ENCODE measurements at regions of chr5 and their contacts with region 1.

Region 1: GRCh38 chr5:36507332-36507952 is 99.0 kb upstream of the SLC1A3 start:
- DNase-seq: peak in 1 of 2 experiments; percentile 91
- H3K4me3 ChIP-seq: no peak overlapping the region
- H3K27ac ChIP-seq: no peak overlapping the region
- H3K4me1 ChIP-seq: no peaks in the 10 kb centered on the region
- H3K27me3 ChIP-seq: no peaks in the 10 kb centered on the region
- CTCF ChIP-seq: peak; percentile 68 to 81 (median 81)
- EP300 ChIP-seq: no peak
- POLR2A ChIP-seq: no peak
- RAD21 ChIP-seq: peak; percentile 75 to 82

Region 2: GRCh38 chr5:36363744-36364143 is 143.7 kb before region 1 on chr5:
- CTCF ChIA-PET with region 1: no interaction called
- POLR2A ChIA-PET with region 1: no interaction called
- DNase-seq: no peak
- H3K4me3 ChIP-seq: no peak overlapping the region
- H3K27ac ChIP-seq: no peak overlapping the region
- H3K4me1 ChIP-seq: no peaks in the 10 kb centered on the region
- H3K27me3 ChIP-seq: no peaks in the 10 kb centered on the region
- CTCF ChIP-seq: no peak
- EP300 ChIP-seq: no peak
- POLR2A ChIP-seq: no peak
- RAD21 ChIP-seq: no peak

Region 3: GRCh38 chr5:36414869-36415282 is 92.6 kb before region 1 on chr5:
- CTCF ChIA-PET with region 1: interaction called, 138 read pairs
- POLR2A ChIA-PET with region 1: no interaction called
- DNase-seq: no peak
- H3K4me3 ChIP-seq: no peak overlapping the region
- H3K27ac ChIP-seq: no peak overlapping the region
- H3K4me1 ChIP-seq: peaks cover 4 to 17% (median 8%) of the 10 kb centered on the region in 4 experiments; a peak in 5 of 7 replicates
- H3K27me3 ChIP-seq: peaks cover 6 to 36% (median 24%) of the 10 kb centered on the region in 4 experiments; a peak in 6 of 7 replicates
- CTCF ChIP-seq: peak in 1 of 3 experiments; percentile 48; a peak in 1 of 4 replicates
- EP300 ChIP-seq: no peak
- POLR2A ChIP-seq: no peak
- RAD21 ChIP-seq: peak; percentile 56 to 70

Region 4: GRCh38 chr5:36494756-36495601 is 12.5 kb before region 1 on chr5:
- CTCF ChIA-PET with region 1: interaction called, 72 read pairs
- POLR2A ChIA-PET with region 1: no interaction called
- DNase-seq: no peak
- H3K4me3 ChIP-seq: no peak overlapping the region
- H3K27ac ChIP-seq: no peak overlapping the region
- H3K4me1 ChIP-seq: peaks cover 0 to 2% (median 0%) of the 10 kb centered on the region in 4 experiments; a peak in 2 of 7 replicates
- H3K27me3 ChIP-seq: no peaks in the 10 kb centered on the region
- CTCF ChIP-seq: no peak
- EP300 ChIP-seq: no peak
- POLR2A ChIP-seq: no peak
- RAD21 ChIP-seq: no peak

Region 5: DNA sequence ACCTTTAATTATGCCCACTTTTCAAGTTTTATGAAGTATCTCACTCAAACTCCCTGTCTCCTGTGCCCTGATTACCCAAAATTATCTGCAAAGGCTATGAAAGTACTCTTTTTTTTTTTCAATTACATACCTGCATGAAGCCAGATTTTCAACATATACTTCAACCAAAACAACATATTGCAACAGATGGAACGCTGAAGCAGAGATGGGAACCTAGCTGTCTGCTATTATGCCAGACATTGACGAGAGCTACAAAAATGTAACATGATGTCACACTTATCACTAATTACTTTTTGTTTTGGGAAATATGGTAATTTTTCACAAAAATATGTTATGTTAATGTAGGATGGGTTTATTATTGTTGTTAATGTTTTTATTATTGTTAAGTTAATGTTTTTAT is 12.4 kb after region 1 on chr5:
- CTCF ChIA-PET with region 1: interaction called, 13 read pairs
- POLR2A ChIA-PET with region 1: no interaction called
- DNase-seq: no peak
- H3K4me3 ChIP-seq: no peak overlapping the region
- H3K27ac ChIP-seq: no peak overlapping the region
- H3K4me1 ChIP-seq: peaks cover 0 to 3% (median 2%) of the 10 kb centered on the region in 4 experiments; a peak in 2 of 7 replicates
- H3K27me3 ChIP-seq: no peaks in the 10 kb centered on the region
- CTCF ChIP-seq: no peak
- EP300 ChIP-seq: no peak
- POLR2A ChIP-seq: no peak
- RAD21 ChIP-seq: no peak

Measured in H1 (cell line).